ENCODE measurements at regions of chr6 and their contacts with region 1.

Region 1: GRCh38 chr6:131427434-131428058 is 145.5 kb upstream of the ARG1 start:
- DNase-seq: no peak
- ATAC-seq: no peak
- H3K4me3 ChIP-seq: no peak overlapping the region
- H3K4me3 Mint-ChIP-seq: no peak overlapping the region
- H3K27ac ChIP-seq: no peak overlapping the region
- H3K27ac Mint-ChIP-seq: no peak overlapping the region
- H3K4me1 ChIP-seq: peaks cover 2% of the 10 kb centered on the region
- H3K4me1 Mint-ChIP-seq: peaks cover 20% of the 10 kb centered on the region
- H3K27me3 ChIP-seq: no peaks in the 10 kb centered on the region
- H3K27me3 Mint-ChIP-seq: no peaks in the 10 kb centered on the region
- CTCF ChIP-seq: no peak

Region 2: DNA sequence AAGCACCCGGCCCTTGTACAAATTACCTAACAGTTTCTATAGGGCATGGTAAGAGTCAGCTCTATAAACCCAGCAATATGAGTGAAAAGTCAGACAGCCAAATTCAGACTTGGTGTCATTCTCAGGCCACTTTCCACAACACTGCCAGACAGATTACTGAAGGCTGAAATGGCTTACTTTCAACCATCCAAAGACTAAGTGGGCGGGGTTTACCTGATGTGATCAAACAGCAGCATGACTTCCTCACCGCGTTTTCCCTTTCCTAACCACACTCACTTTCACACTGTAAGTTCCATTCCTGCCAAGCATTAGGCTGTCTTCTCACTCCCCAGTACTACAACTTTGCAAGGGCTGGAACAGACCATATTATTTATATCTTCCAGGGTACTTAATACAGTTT is 514.4 kb before region 1 on chr6:
- CTCF ChIA-PET with region 1: no interaction called
- POLR2A ChIA-PET with region 1: no interaction called
- intact Hi-C with region 1: no loop called
- DNase-seq: peak in 4 of 14 experiments; percentile 11 to 52 (median 28)
- ATAC-seq: peak; percentile 54
- H3K4me3 ChIP-seq: no peak overlapping the region
- H3K4me3 Mint-ChIP-seq: no peak overlapping the region
- H3K27ac ChIP-seq: no peak overlapping the region
- H3K27ac Mint-ChIP-seq: no peak overlapping the region
- H3K4me1 ChIP-seq: peaks cover 4% of the 10 kb centered on the region
- H3K4me1 Mint-ChIP-seq: peaks cover 12% of the 10 kb centered on the region
- H3K27me3 ChIP-seq: no peaks in the 10 kb centered on the region
- H3K27me3 Mint-ChIP-seq: no peaks in the 10 kb centered on the region
- CTCF ChIP-seq: no peak

Region 3: DNA sequence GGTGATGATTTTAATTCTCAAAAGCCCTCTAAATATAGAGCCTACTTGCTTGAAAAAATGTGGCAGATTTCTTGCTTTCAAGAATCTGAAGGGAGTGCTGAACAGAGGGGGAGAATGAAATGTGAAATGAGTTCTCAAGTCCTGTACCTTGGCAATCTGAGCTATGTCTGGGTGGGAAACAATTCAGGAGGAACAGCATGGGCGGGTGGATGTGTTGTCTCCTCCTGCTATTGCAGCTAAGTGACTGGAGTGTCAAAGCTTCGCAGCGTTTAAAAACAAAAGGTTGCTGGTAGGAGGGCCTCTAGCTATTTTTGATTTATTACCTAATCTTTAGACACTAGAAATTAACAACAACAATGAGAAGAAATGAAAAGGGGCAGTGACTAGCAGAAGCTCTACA is 43.0 kb after region 1 on chr6:
- CTCF ChIA-PET with region 1: no interaction called
- POLR2A ChIA-PET with region 1: no interaction called
- intact Hi-C with region 1: loop called in 1 of 2 experiments (anchors 5 kb)
- DNase-seq: no peak
- ATAC-seq: no peak
- H3K4me3 ChIP-seq: no peak overlapping the region
- H3K4me3 Mint-ChIP-seq: no peak overlapping the region
- H3K27ac ChIP-seq: no peak overlapping the region
- H3K27ac Mint-ChIP-seq: no peak overlapping the region
- H3K4me1 ChIP-seq: no peaks in the 10 kb centered on the region
- H3K4me1 Mint-ChIP-seq: no peaks in the 10 kb centered on the region
- H3K27me3 ChIP-seq: no peaks in the 10 kb centered on the region
- H3K27me3 Mint-ChIP-seq: no peaks in the 10 kb centered on the region
- CTCF ChIP-seq: no peak

Measured in CD4-positive, alpha-beta T cell (primary cell).